GM12878 (cell line): ENCODE measurements at regions of chr2 and their contacts with region 1.

Region 1: DNA sequence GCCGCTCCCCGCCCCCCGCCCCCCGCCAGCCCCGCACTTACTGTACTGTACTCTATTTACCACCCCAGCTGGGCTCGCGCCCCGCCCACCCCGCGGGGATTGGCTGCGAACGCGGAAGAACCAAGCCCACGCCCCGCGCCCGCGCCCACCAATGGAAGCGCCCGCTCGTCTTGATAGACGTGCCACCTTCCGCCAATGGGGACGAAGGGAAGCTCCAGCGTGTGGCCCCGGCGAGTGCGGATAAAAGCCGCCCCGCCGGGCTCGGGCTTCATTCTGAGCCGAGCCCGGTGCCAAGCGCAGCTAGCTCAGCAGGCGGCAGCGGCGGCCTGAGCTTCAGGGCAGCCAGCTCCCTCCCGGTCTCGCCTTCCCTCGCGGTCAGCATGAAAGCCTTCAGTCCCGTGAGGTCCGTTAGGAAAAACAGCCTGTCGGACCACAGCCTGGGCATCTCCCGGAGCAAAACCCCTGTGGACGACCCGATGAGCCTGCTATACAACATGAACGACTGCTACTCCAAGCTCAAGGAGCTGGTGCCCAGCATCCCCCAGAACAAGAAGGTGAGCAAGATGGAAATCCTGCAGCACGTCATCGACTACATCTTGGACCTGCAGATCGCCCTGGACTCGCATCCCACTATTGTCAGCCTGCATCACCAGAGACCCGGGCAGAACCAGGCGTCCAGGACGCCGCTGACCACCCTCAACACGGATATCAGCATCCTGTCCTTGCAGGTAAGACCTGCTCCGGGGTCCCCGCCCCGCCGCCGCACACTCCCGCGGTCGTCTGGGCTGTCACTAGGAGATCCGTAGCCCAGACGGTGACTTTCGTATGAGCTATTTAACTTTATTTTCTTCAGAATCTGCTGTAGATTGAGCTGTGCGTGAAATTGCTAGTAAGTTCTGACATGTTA is at the start of gene ID2:
- DNase-seq: peak; percentile 88
- ATAC-seq: peak; percentile 64
- H3K4me3 ChIP-seq: peak within 1 kb of the TSS; percentile 80
- H3K27ac ChIP-seq: peak within 1 kb of the TSS; percentile 71
- H3K4me1 ChIP-seq: peaks cover 23% of the 10 kb centered on the region
- H3K27me3 ChIP-seq: peaks cover 0 to 8% of the 10 kb centered on the region in 2 experiments; a peak in 1 of 4 replicates
- CTCF ChIP-seq: no peak
- EP300 ChIP-seq: no peak
- POLR2A ChIP-seq: peak; percentile 99
- RAD21 ChIP-seq: no peak
- polyA plus RNA-seq, gene ID2: 77.3 to 82.5 TPM

Region 2: GRCh38 chr2:7203055-7203467 is 1479.0 kb before region 1 on chr2:
- CTCF ChIA-PET with region 1: interaction called, 3 read pairs
- POLR2A ChIA-PET with region 1: no interaction called
- RAD21 ChIA-PET with region 1: interaction called, 7 read pairs
- SMC1A ChIA-PET with region 1: interaction called, 3 read pairs
- in situ Hi-C with region 1: no loop called
- intact Hi-C with region 1: loop called (anchors 5 kb)
- DNase-seq: peak; percentile 16
- ATAC-seq: peak; percentile 86
- H3K4me3 ChIP-seq: no peak overlapping the region
- H3K27ac ChIP-seq: no peak overlapping the region
- H3K4me1 ChIP-seq: no peaks in the 10 kb centered on the region
- H3K27me3 ChIP-seq: no peaks in the 10 kb centered on the region
- CTCF ChIP-seq: peak; percentile 77 to 96 (median 88)
- EP300 ChIP-seq: no peak
- POLR2A ChIP-seq: no peak
- RAD21 ChIP-seq: peak; percentile 85

Region 3: GRCh38 chr2:8169443-8169842 is 512.6 kb before region 1 on chr2:
- CTCF ChIA-PET with region 1: no interaction called
- POLR2A ChIA-PET with region 1: no interaction called
- RAD21 ChIA-PET with region 1: no interaction called
- SMC1A ChIA-PET with region 1: no interaction called
- in situ Hi-C with region 1: no loop called
- intact Hi-C with region 1: loop called (anchors 10 kb)
- DNase-seq: no peak
- ATAC-seq: no peak
- H3K4me3 ChIP-seq: no peak overlapping the region
- H3K27ac ChIP-seq: no peak overlapping the region
- H3K4me1 ChIP-seq: no peaks in the 10 kb centered on the region
- H3K27me3 ChIP-seq: no peaks in the 10 kb centered on the region
- CTCF ChIP-seq: no peak
- EP300 ChIP-seq: no peak
- POLR2A ChIP-seq: no peak
- RAD21 ChIP-seq: no peak

Region 4: GRCh38 chr2:8408560-8409460 is 273.2 kb before region 1 on chr2:
- CTCF ChIA-PET with region 1: no interaction called
- POLR2A ChIA-PET with region 1: interaction called, 6 read pairs
- RAD21 ChIA-PET with region 1: interaction called, 31 read pairs
- SMC1A ChIA-PET with region 1: interaction called, 21 read pairs
- in situ Hi-C with region 1: no loop called
- intact Hi-C with region 1: no loop called
- DNase-seq: peak; percentile 99
- ATAC-seq: peak; percentile 90
- H3K4me3 ChIP-seq: no peak overlapping the region
- H3K27ac ChIP-seq: peak overlapping the region; percentile 80
- H3K4me1 ChIP-seq: peaks cover 32% of the 10 kb centered on the region
- H3K27me3 ChIP-seq: no peaks in the 10 kb centered on the region
- CTCF ChIP-seq: no peak
- EP300 ChIP-seq: peak; percentile 95 to 96
- POLR2A ChIP-seq: no peak
- RAD21 ChIP-seq: peak; percentile 29; the same call in 1 of the 2 replicates

Region 5: DNA sequence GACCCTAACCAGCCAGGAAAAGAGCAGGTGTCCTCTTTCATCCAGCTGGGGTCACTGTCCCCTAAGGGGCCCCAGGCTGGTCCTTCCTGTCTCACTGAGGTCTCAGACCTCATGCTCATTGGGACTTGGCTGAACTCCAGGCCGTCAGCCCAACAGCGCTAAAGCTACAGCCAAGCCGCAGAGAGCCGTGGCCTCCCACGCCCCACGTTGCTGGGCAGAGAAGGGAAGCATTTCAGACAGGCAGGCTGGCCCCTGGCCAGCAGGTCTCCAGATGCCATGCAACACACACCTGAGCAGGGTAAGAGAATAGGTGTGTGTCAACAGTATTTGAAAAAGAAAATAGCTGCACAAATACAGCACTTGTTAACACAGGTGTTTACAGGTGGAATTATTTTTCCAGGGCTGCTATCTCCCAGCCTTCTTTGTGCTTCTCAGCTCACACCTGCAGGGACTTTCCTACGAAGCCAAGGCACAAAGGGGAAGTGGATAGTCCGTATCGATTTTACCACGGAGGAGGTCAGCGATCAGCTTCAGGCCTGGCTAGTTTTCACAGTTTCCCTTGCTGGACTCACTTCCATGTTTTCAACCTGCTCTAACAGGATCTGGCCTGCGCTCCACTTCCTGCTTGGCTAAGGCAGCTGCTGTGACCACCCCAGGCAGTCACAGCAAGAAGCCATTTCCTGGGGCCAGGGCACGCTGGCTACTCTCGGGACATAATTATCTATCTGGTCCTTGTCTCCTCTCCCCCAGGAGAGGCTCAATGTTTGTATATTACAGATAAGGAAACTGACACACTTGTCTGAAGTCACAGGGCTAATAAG is 156.2 kb before region 1 on chr2:
- CTCF ChIA-PET with region 1: interaction called, 28 read pairs
- POLR2A ChIA-PET with region 1: interaction called, 98 read pairs
- RAD21 ChIA-PET with region 1: interaction called, 71 read pairs
- SMC1A ChIA-PET with region 1: interaction called, 43 read pairs
- in situ Hi-C with region 1: loop called (anchors 5 kb)
- intact Hi-C with region 1: loop called (anchors 1 kb)
- DNase-seq: peak; percentile 90
- ATAC-seq: peak; percentile 82
- H3K4me3 ChIP-seq: 0 out of 2 replicates have a peak overlapping the region, but pooled peaks have one; percentile 9
- H3K27ac ChIP-seq: peak overlapping the region; percentile 74
- H3K4me1 ChIP-seq: peaks cover 64% of the 10 kb centered on the region
- H3K27me3 ChIP-seq: no peaks in the 10 kb centered on the region
- CTCF ChIP-seq: peak; percentile 54 to 72 (median 58)
- EP300 ChIP-seq: peak in 1 of 2 experiments; percentile 80; a peak in 3 of 4 replicates
- POLR2A ChIP-seq: no peak
- RAD21 ChIP-seq: peak; percentile 88

Region 6: GRCh38 chr2:8583400-8584173 is 98.5 kb before region 1 on chr2:
- CTCF ChIA-PET with region 1: interaction called, 9 read pairs
- POLR2A ChIA-PET with region 1: interaction called, 34 read pairs
- RAD21 ChIA-PET with region 1: interaction called, 76 read pairs
- SMC1A ChIA-PET with region 1: interaction called, 36 read pairs
- in situ Hi-C with region 1: no loop called
- intact Hi-C with region 1: no loop called
- DNase-seq: peak; percentile 80
- ATAC-seq: peak; percentile 95
- H3K4me3 ChIP-seq: peak overlapping the region; percentile 30; the same call in 1 of the 2 replicates
- H3K27ac ChIP-seq: peak overlapping the region; percentile 51; the same call in 1 of the 2 replicates
- H3K4me1 ChIP-seq: peaks cover 27% of the 10 kb centered on the region
- H3K27me3 ChIP-seq: no peaks in the 10 kb centered on the region
- CTCF ChIP-seq: no peak
- EP300 ChIP-seq: no peak
- POLR2A ChIP-seq: peak; percentile 52; the same call in 1 of the 2 replicates
- RAD21 ChIP-seq: no peak

Region 7: DNA sequence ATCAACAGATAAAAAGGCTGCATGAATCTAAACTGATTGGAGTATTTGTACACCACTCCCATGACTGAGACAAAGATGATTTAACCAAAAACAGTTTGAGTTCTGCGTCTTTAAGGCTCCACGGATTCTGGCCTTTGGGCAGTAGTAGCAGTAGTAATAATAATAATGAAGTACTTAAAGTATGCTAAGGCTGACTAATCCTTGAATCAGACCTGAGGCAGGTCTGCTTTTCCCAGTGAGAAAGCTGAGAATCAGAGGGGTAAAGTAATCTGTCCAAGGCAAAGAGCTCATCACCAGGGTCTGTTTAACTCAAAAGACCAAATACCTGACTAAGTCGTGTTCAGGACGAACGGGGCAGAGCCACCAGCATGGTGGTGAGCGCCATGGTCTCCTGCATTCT is 61.2 kb after region 1 on chr2:
- CTCF ChIA-PET with region 1: no interaction called
- POLR2A ChIA-PET with region 1: no interaction called
- RAD21 ChIA-PET with region 1: no interaction called
- SMC1A ChIA-PET with region 1: no interaction called
- in situ Hi-C with region 1: no loop called
- intact Hi-C with region 1: no loop called
- DNase-seq: no peak
- ATAC-seq: no peak
- H3K4me3 ChIP-seq: no peak overlapping the region
- H3K27ac ChIP-seq: no peak overlapping the region
- H3K4me1 ChIP-seq: no peaks in the 10 kb centered on the region
- H3K27me3 ChIP-seq: no peaks in the 10 kb centered on the region
- CTCF ChIP-seq: no peak
- EP300 ChIP-seq: no peak
- POLR2A ChIP-seq: no peak
- RAD21 ChIP-seq: no peak

Region 8: GRCh38 chr2:8851811-8852560 is 169.9 kb after region 1 on chr2:
- CTCF ChIA-PET with region 1: no interaction called
- POLR2A ChIA-PET with region 1: no interaction called
- RAD21 ChIA-PET with region 1: no interaction called
- SMC1A ChIA-PET with region 1: no interaction called
- in situ Hi-C with region 1: no loop called
- intact Hi-C with region 1: no loop called
- DNase-seq: no peak
- ATAC-seq: no peak
- H3K4me3 ChIP-seq: no peak overlapping the region
- H3K27ac ChIP-seq: no peak overlapping the region
- H3K4me1 ChIP-seq: no peaks in the 10 kb centered on the region
- H3K27me3 ChIP-seq: no peaks in the 10 kb centered on the region
- CTCF ChIP-seq: no peak
- EP300 ChIP-seq: no peak
- POLR2A ChIP-seq: no peak
- RAD21 ChIP-seq: no peak